ENCODE measurements at regions of chr12 and their contacts with region 1.

Region 1: GRCh38 chr12:75933101-75933500 is 98.5 kb downstream of the PHLDA1 start:
- DNase-seq: no peak
- ATAC-seq: no peak
- H3K4me3 Mint-ChIP-seq: no peak overlapping the region
- H3K27ac Mint-ChIP-seq: no peak overlapping the region
- H3K4me1 Mint-ChIP-seq: peaks cover 5% of the 10 kb centered on the region
- H3K27me3 Mint-ChIP-seq: peaks cover 27% of the 10 kb centered on the region
- CTCF ChIP-seq: no peak

Region 2: GRCh38 chr12:75511116-75512048 is 421.7 kb before region 1 on chr12 and contains the start of gene KRR1:
- CTCF ChIA-PET with region 1: no interaction called
- POLR2A ChIA-PET with region 1: no interaction called
- intact Hi-C with region 1: no loop called
- DNase-seq: peak; percentile 72
- ATAC-seq: peak; percentile 96
- H3K4me3 Mint-ChIP-seq: peak within 1 kb of the TSS; percentile 99
- H3K27ac Mint-ChIP-seq: peak within 1 kb of the TSS; percentile 99
- H3K4me1 Mint-ChIP-seq: peaks cover 27% of the 10 kb centered on the region
- H3K27me3 Mint-ChIP-seq: no peaks in the 10 kb centered on the region
- CTCF ChIP-seq: no peak
- total RNA-seq, gene KRR1: 75.0 and 85.1 TPM in 2 replicates

Region 3: GRCh38 chr12:75603475-75603874 is 329.6 kb before region 1 on chr12:
- CTCF ChIA-PET with region 1: no interaction called
- POLR2A ChIA-PET with region 1: no interaction called
- intact Hi-C with region 1: no loop called
- DNase-seq: no peak
- ATAC-seq: no peak
- H3K4me3 Mint-ChIP-seq: no peak overlapping the region
- H3K27ac Mint-ChIP-seq: no peak overlapping the region
- H3K4me1 Mint-ChIP-seq: no peaks in the 10 kb centered on the region
- H3K27me3 Mint-ChIP-seq: peaks cover 18% of the 10 kb centered on the region
- CTCF ChIP-seq: no peak

Region 4: GRCh38 chr12:75759842-75760572 is 173.1 kb before region 1 on chr12:
- CTCF ChIA-PET with region 1: no interaction called
- POLR2A ChIA-PET with region 1: no interaction called
- intact Hi-C with region 1: no loop called
- DNase-seq: no peak
- ATAC-seq: no peak
- H3K4me3 Mint-ChIP-seq: no peak overlapping the region
- H3K27ac Mint-ChIP-seq: no peak overlapping the region
- H3K4me1 Mint-ChIP-seq: no peaks in the 10 kb centered on the region
- H3K27me3 Mint-ChIP-seq: peaks cover 2% of the 10 kb centered on the region
- CTCF ChIP-seq: no peak

Region 5: GRCh38 chr12:75944097-75944904 is 11.2 kb after region 1 on chr12:
- CTCF ChIA-PET with region 1: interaction called, 3 read pairs
- POLR2A ChIA-PET with region 1: interaction called, 5 read pairs
- intact Hi-C with region 1: loop called (anchors 1 kb)
- DNase-seq: no peak
- ATAC-seq: peak; percentile 88
- H3K4me3 Mint-ChIP-seq: peak overlapping the region; percentile 56
- H3K27ac Mint-ChIP-seq: peak overlapping the region; percentile 83
- H3K4me1 Mint-ChIP-seq: peaks cover 18% of the 10 kb centered on the region
- H3K27me3 Mint-ChIP-seq: no peaks in the 10 kb centered on the region
- CTCF ChIP-seq: no peak

Region 6: DNA sequence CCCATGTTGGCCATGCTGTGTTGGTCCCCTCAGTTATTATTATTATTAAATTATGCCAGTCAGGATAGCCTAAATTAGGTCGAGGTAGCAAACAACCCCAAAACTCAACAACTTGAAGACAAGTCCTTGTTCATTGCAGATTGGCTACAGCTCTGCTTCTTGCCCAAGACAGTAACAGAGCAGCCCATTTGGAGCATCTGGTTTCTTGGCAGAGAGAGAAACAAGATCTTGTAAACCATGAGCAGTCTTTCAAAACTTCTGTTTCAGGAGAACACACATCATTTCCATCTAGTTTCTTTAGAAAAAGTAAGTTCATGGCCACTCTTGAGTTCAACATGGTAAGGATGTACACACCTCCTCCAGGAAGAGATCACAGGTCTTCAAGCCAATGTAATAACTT is 1080.0 kb after region 1 on chr12:
- CTCF ChIA-PET with region 1: no interaction called
- POLR2A ChIA-PET with region 1: no interaction called
- intact Hi-C with region 1: no loop called
- DNase-seq: no peak
- ATAC-seq: no peak
- H3K4me3 Mint-ChIP-seq: no peak overlapping the region
- H3K27ac Mint-ChIP-seq: no peak overlapping the region
- H3K4me1 Mint-ChIP-seq: peaks cover 4% of the 10 kb centered on the region
- H3K27me3 Mint-ChIP-seq: peaks cover 8% of the 10 kb centered on the region
- CTCF ChIP-seq: no peak